Activated CD4-positive, alpha-beta memory T cell treated with anti-CD3 and anti-CD28 coated beads for 36 hours (primary cell): ENCODE measurements at regions of chr4 and their contacts with region 1.

Region 1: GRCh38 chr4:89294573-89295269 is 12.9 kb downstream of the GPRIN3 start:
- DNase-seq: no peak
- H3K4me3 Mint-ChIP-seq: peak overlapping the region; percentile 57
- H3K27ac Mint-ChIP-seq: peak overlapping the region; percentile 97
- H3K4me1 Mint-ChIP-seq: peaks cover 84% of the 10 kb centered on the region
- H3K27me3 Mint-ChIP-seq: no peaks in the 10 kb centered on the region

Region 2: DNA sequence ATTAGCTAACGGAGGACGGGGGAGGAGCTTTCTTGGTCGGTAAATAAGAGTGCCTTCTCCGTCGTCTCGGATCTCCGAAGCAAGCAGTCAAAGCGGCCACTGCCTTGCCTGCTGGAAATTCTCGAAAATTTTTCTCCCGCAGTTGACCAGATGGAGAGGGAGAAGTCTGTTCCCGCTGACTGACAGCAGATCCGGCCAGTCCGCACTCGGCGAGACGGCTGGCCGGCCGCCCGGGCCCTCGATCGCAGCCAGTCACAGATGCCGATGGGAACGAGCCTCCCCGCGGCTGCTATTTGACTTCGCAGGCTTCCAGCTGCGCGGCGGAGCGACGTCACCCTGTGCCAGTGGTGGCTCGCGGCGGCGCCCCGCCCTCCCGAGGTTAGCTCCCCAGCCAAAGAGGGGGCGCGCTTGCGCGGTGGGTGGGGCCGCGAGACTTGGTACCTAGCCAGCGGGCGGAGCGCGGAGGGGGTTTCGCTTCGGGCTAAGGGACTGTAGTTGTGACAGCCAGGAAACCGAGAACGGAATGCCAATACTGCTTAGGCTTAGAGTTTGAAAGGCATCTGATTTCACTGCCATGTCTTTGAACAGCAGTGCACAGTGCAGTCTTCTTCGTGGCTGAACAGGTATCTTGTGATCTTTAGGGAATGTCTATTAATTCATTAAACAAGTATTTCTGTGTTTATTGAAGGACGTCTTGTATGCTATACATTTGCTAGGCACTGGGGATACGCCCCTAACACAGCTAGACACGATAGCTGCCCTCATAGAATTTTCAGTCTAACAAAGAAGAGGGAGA is 1010.1 kb before region 1 on chr4 and contains the start of gene PPM1K:
- CTCF ChIA-PET with region 1: no interaction called
- POLR2A ChIA-PET with region 1: interaction called, 3 read pairs
- intact Hi-C with region 1: loop called (anchors 5 kb)
- DNase-seq: peak; percentile 100
- H3K4me3 Mint-ChIP-seq: peak within 1 kb of the TSS; percentile 99
- H3K27ac Mint-ChIP-seq: peak within 1 kb of the TSS; percentile 99
- H3K4me1 Mint-ChIP-seq: peaks cover 36% of the 10 kb centered on the region
- H3K27me3 Mint-ChIP-seq: no peaks in the 10 kb centered on the region
- total RNA-seq, gene PPM1K: 63.7 to 65.5 TPM

Region 3: GRCh38 chr4:88591787-88592599 is 702.7 kb before region 1 on chr4 and contains the start of gene HERC3:
- CTCF ChIA-PET with region 1: no interaction called
- POLR2A ChIA-PET with region 1: no interaction called
- intact Hi-C with region 1: loop called (anchors 10 kb)
- DNase-seq: peak; percentile 92
- H3K4me3 Mint-ChIP-seq: peak within 1 kb of the TSS; percentile 95
- H3K27ac Mint-ChIP-seq: peak within 1 kb of the TSS; percentile 85
- H3K4me1 Mint-ChIP-seq: peaks cover 41% of the 10 kb centered on the region
- H3K27me3 Mint-ChIP-seq: peaks cover 4% of the 10 kb centered on the region
- total RNA-seq, gene HERC3: 29.0 to 30.2 TPM

Region 4: DNA sequence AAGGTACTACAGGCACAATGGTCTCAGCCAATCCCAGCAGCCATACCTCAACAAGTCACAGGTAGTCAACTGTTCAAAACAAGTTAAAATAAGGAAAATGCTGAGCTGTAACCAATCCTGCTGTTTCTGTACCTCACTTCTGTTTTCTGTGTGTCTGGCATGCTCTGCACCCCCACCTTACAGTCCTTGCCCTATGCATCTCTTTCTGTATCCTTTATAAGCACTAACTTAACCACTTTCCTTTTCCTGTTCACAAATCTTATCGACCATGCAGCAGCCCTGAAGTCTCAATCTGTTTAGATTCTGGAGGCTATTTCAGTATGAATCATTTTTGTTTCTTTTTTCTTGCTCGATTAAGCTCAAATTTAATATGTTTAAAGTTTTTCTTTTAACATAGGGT is 225.2 kb before region 1 on chr4:
- CTCF ChIA-PET with region 1: no interaction called
- POLR2A ChIA-PET with region 1: no interaction called
- intact Hi-C with region 1: no loop called
- DNase-seq: no peak
- H3K4me3 Mint-ChIP-seq: no peak overlapping the region
- H3K27ac Mint-ChIP-seq: no peak overlapping the region
- H3K4me1 Mint-ChIP-seq: peaks cover 3% of the 10 kb centered on the region
- H3K27me3 Mint-ChIP-seq: peaks cover 3% of the 10 kb centered on the region

Region 5: DNA sequence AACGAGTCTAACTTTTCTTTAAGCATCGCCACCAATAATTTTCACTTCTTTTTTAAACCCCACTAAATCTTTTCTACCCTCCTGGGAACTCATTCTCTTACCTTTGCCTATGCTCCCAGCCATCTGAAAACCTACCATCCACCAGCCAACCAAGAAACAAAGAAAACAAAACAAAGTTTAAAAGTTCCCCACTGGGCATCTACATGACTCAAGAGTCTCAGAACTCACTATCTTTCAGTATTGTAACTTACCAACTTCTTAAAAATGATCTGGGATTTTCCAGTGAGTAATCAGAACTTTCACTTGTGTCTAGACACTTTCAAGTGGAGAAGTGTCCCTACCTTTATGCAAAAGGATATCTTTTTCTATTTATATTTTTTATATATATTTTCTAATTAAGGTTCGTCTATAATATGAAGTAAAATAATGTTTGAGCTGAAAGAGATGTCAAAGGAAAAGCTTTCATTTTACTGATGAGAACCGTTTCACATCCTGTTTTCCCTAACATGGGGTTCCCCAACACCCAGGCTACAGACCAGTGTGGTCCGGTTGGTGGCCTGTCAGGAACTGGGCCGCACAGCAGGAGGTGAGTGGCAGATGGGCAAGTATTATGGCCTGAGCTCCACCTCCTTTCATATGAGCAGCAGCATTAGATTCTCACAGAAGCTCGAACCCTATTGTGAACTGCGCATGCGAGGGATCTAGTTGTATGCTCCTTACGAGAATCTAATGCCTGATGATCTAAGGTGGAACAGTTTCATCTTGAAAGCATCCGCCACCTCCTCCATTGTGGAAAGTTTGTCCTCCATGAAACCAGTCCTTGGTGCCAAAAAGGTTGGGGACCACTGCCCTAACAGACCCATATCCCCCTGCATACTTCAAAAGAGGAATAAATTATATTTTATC is 193.2 kb before region 1 on chr4:
- CTCF ChIA-PET with region 1: no interaction called
- POLR2A ChIA-PET with region 1: no interaction called
- intact Hi-C with region 1: loop called (anchors 5 kb)
- DNase-seq: no peak
- H3K4me3 Mint-ChIP-seq: no peak overlapping the region
- H3K27ac Mint-ChIP-seq: peak overlapping the region; percentile 41
- H3K4me1 Mint-ChIP-seq: peaks cover 14% of the 10 kb centered on the region
- H3K27me3 Mint-ChIP-seq: peaks cover 7% of the 10 kb centered on the region

Region 6: DNA sequence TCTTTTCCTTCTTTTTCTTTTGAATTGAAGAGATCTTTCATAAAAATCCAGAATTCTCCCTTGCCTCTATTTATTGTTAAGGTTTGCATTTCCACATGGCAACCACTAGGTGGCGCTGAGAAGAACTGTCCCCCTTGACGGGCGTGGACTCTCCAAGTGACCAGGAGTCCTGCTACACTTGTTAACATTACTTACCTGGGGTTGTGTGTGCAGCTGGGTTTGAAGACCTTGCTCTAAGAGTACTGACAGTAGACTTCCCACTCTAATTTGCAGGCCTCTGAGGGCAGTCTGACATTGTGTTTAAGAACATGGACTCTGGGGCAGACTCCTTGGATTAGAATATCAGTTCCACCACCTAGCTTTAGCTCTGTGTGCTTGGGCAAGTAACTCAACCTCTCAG is 39.9 kb before region 1 on chr4:
- CTCF ChIA-PET with region 1: interaction called, 35 read pairs
- POLR2A ChIA-PET with region 1: interaction called, 4 read pairs
- intact Hi-C with region 1: loop called (anchors 1 kb)
- DNase-seq: peak; percentile 59
- H3K4me3 Mint-ChIP-seq: no peak overlapping the region
- H3K27ac Mint-ChIP-seq: peak overlapping the region; percentile 15
- H3K4me1 Mint-ChIP-seq: peaks cover 78% of the 10 kb centered on the region
- H3K27me3 Mint-ChIP-seq: no peaks in the 10 kb centered on the region

Region 7: GRCh38 chr4:89307446-89308160 is 12.9 kb after region 1 on chr4 and contains the start of gene GPRIN3:
- CTCF ChIA-PET with region 1: interaction called, 8 read pairs
- POLR2A ChIA-PET with region 1: interaction called, 139 read pairs
- intact Hi-C with region 1: loop called (anchors 1 kb)
- DNase-seq: peak; percentile 81
- H3K4me3 Mint-ChIP-seq: peak within 1 kb of the TSS; percentile 89
- H3K27ac Mint-ChIP-seq: peak within 1 kb of the TSS; percentile 83
- H3K4me1 Mint-ChIP-seq: peaks cover 62% of the 10 kb centered on the region
- H3K27me3 Mint-ChIP-seq: no peaks in the 10 kb centered on the region
- total RNA-seq, gene GPRIN3: 20.0 to 22.7 TPM

Region 8: DNA sequence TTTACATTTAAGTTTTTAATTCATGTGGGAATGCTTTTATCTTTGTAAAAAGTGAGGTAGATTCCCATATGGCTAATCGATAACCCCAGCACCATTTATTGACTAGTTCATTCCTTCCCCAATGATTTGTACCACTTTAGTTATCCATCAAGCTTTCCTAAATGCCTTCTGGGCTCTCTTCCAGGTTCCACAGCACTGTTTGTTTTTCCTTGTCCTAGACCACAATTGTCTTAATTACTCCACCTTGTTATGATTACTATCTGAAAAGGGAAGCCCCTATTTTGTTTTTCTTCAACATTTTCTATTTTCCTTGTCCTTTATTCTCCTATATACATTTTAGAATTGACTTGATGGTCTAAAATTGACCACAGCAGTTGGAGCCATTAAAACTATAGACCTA is 61.4 kb after region 1 on chr4:
- CTCF ChIA-PET with region 1: no interaction called
- POLR2A ChIA-PET with region 1: no interaction called
- intact Hi-C with region 1: no loop called
- DNase-seq: no peak
- H3K4me3 Mint-ChIP-seq: no peak overlapping the region
- H3K27ac Mint-ChIP-seq: no peak overlapping the region
- H3K4me1 Mint-ChIP-seq: no peaks in the 10 kb centered on the region
- H3K27me3 Mint-ChIP-seq: peaks cover 5% of the 10 kb centered on the region

Region 9: DNA sequence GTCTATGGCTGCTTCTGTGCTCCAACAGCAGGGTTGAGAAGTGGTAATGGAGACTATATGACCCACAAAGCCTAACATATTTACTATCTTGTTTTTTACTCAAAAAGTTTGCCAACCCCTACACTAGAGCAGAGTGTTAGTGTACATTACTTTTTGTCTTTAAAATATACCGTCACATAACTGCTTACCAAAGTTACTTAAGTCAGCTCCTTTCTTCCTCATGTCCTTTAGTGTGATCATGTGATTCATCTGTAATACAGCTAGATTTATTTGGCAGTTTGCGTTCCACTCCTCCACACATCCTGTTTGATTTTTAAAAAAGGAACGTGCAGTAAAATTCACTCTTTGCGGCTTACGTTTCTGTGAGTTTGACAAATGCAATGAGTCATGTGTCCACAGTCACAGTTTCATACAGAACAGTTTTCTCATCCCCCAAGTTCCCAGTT is 175.2 kb after region 1 on chr4:
- CTCF ChIA-PET with region 1: no interaction called
- POLR2A ChIA-PET with region 1: no interaction called
- intact Hi-C with region 1: loop called (anchors 2 kb)
- DNase-seq: peak; percentile 37
- H3K4me3 Mint-ChIP-seq: peak overlapping the region; percentile 14
- H3K27ac Mint-ChIP-seq: peak overlapping the region; percentile 49
- H3K4me1 Mint-ChIP-seq: peaks cover 26% of the 10 kb centered on the region
- H3K27me3 Mint-ChIP-seq: no peaks in the 10 kb centered on the region